Activated naive CD8-positive, alpha-beta T cell treated with anti-CD3 and anti-CD28 coated beads, Interleukin-2, amount 10 ng/mL, durations not matched to agents 7 days and 5 days (primary cell): ENCODE measurements at regions of chr6 and their contacts with region 1.

Region 1: DNA sequence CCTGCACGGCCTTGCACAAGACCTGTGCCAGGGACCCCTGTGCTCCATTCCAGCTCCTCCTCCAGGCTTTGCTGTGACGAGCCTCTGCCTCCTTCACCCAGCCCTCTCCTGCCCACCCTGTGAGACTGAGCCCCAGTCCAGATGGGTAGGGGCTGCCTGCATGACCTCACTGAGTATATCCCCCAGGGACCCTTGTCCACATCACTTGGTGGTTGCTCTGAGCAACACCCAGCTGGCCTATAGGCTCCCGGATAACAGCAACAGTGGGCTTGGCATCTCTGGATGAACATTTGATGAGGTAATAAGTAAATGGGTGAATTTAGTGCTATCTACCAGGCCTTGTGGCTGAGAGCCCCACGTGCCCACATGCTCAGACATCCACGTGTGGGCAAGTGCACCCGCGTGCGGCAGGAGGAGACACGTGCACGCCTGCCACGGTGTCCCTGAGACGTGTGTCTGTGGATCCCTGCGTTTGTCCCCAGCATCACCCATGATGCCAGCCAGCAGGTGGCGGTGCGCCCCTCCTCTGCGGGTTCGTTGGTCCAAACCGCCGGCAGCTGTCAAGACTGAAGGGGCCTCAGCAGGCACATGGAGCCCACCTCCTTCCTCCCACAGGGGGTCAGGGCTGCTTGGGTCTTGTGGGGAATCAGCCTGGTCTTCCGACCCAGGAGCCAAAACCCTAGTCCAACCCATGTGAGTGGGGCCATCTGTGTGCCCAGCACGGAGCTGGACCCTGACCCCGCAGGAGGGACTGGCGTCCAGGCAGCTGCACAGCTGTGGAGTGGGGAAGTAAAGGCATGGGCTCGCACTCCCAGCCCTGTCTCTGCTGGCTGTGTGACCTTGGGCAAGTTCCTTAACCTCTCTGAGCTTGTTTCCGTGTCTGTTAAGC is 45.9 kb downstream of the FGD2 start:
- DNase-seq: peak; percentile 93
- ATAC-seq: peak; percentile 49
- H3K4me3 Mint-ChIP-seq: peak overlapping the region; percentile 83
- H3K27ac Mint-ChIP-seq: peak overlapping the region; percentile 94
- H3K4me1 Mint-ChIP-seq: peaks cover 68% of the 10 kb centered on the region
- H3K27me3 Mint-ChIP-seq: no peaks in the 10 kb centered on the region

Region 2: DNA sequence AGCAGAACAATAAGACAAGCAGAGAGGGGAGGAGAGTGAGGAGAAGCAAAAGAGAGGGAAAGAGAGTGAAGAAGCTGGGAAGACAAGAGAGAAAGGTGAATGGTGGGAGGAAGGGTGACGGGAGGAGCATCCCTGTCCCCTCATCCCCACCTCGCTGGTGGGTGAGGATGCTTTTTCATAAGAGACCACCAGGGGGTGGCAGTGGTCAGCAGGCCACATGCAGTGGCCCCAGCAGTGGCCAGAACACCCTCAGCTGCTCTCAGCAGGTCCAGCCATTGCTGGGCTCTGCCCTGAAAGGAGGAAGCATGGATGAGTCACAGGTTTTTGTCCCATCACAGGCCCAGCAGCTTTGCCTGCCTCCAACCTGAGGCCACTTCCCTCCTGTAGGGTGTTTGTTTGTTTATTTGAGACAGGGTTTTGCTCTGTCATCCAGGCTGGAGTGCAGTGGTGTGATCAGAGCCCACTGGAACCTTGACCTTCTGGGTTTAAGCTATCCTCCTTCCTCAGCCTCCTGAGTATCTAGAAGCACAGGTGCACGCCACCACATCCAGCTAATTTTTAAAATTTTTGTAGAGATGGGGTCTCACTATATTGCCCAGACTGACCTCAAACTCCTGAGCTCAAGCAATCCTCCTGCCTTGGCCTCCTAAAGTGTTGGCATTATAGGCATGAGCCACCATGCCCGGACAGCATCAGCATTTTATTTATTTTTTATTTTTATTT is 22.0 kb before region 1 on chr6:
- POLR2A ChIA-PET with region 1: interaction called, 215 read pairs
- DNase-seq: no peak
- ATAC-seq: peak; percentile 74
- H3K4me3 Mint-ChIP-seq: peak overlapping the region; percentile 20
- H3K27ac Mint-ChIP-seq: peak overlapping the region; percentile 92
- H3K4me1 Mint-ChIP-seq: peaks cover 54% of the 10 kb centered on the region
- H3K27me3 Mint-ChIP-seq: no peaks in the 10 kb centered on the region

Region 3: DNA sequence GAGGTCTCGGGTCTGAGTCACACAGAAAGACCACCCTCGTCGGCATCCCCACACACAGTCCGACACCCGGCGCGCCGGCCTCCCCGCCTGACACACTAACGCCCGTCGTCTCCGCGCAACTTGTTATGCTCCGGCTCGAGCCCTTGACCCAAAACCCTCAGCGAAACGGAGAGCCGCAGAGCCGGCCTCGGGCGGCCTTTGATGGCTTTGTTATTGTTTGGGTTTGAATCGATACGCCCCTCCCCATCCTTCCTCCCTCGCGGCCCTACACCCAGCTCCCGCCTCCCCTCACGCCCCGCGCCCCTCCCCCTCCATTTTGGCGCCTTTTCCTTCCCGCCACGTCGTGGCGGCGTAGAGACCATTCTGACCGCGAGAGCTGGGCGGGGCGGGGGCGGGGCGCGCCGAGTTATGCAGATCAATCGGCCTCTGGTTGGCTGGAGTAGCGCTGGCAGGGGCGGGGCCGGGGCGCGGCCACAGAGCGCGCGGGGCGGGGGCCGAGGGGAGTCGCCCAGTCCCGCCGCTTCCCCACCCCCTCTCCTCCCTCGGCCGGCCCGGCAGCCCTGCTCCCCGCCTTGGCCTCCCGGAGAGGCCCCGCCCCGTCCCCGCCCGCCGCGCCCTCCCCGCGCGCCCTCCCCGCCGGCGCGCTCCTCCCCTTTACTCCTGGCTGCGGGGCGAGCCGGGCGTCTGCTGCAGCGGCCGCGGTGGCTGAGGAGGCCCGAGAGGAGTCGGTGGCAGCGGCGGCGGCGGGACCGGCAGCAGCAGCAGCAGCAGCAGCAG is 118.3 kb after region 1 on chr6 and contains the start of gene PIM1:
- POLR2A ChIA-PET with region 1: interaction called, 580 read pairs
- DNase-seq: peak; percentile 98
- ATAC-seq: peak; percentile 69
- H3K4me3 Mint-ChIP-seq: peak within 1 kb of the TSS; percentile 99
- H3K27ac Mint-ChIP-seq: peak within 1 kb of the TSS; percentile 99
- H3K4me1 Mint-ChIP-seq: peaks cover 23% of the 10 kb centered on the region
- H3K27me3 Mint-ChIP-seq: no peaks in the 10 kb centered on the region
- total RNA-seq, gene PIM1: 428 to 445 TPM

Region 4: DNA sequence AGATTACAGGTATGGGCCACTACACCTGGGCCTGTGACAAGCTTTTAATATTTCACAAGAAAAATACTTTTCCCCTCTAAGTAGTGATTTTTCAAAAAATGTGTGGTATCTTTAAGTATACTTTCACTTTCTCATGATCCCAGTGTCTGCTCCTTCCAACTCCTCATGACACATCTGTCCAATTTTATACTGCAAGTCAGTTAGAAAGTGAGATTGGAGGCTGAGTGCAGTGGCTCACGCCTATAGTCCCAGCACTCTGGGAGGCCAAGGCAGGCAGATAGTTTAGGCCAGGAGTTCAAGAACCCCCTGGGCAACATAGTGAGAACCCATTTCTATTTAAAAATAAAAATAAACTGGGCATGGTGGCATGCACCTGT is 138.8 kb after region 1 on chr6:
- POLR2A ChIA-PET with region 1: interaction called, 49 read pairs
- DNase-seq: peak; percentile 26
- ATAC-seq: peak; percentile 48
- H3K4me3 Mint-ChIP-seq: peak overlapping the region; percentile 60
- H3K27ac Mint-ChIP-seq: peak overlapping the region; percentile 90
- H3K4me1 Mint-ChIP-seq: peaks cover 56% of the 10 kb centered on the region
- H3K27me3 Mint-ChIP-seq: no peaks in the 10 kb centered on the region